ENCODE measurements at regions of chr5 and their contacts with region 1.

Region 1: GRCh38 chr5:91200692-91201091 is 182.4 kb downstream of the ARRDC3 start:
- DNase-seq: no peak
- H3K4me3 ChIP-seq: no peak overlapping the region
- H3K27ac ChIP-seq: no peak overlapping the region
- H3K4me1 ChIP-seq: no peaks in the 10 kb centered on the region
- H3K27me3 ChIP-seq: no peaks in the 10 kb centered on the region
- CTCF ChIP-seq: no peak
- EP300 ChIP-seq: no peak
- POLR2A ChIP-seq: no peak

Region 2: GRCh38 chr5:90409318-90410177 is 791.1 kb before region 1 on chr5 and contains the start of gene CETN3:
- intact Hi-C with region 1: loop called (anchors 5 kb)
- DNase-seq: peak; percentile 97
- H3K4me3 ChIP-seq: peak within 1 kb of the TSS; percentile 70 to 85 (median 78)
- H3K27ac ChIP-seq: peak within 1 kb of the TSS; percentile 90 to 98 (median 96)
- H3K4me1 ChIP-seq: peaks cover 0 to 15% (median 10%) of the 10 kb centered on the region in 4 donors
- H3K27me3 ChIP-seq: no peaks in the 10 kb centered on the region
- CTCF ChIP-seq: no peak
- EP300 ChIP-seq: no peak
- POLR2A ChIP-seq: peak; percentile 74 to 86
- total RNA-seq, gene CETN3: 2.8 to 13.2 (median 7.7) TPM

Measured in sigmoid colon (tissue), 7 donors.